PC-9 (cell line): ENCODE measurements at regions of chr7 and their contacts with region 1.

Region 1: GRCh38 chr7:117582219-117582704 is 102.4 kb downstream of the CFTR start:
- DNase-seq: peak; percentile 63 to 78
- H3K4me3 ChIP-seq: no peak overlapping the region
- H3K27ac ChIP-seq: peak overlapping the region; percentile 18; the same call in 1 of the 2 replicates
- H3K4me1 ChIP-seq: no peaks in the 10 kb centered on the region
- H3K27me3 ChIP-seq: no peaks in the 10 kb centered on the region
- CTCF ChIP-seq: no peak

Region 2: GRCh38 chr7:117597755-117598154 is 15.5 kb after region 1 on chr7:
- CTCF ChIA-PET with region 1: no interaction called
- POLR2A ChIA-PET with region 1: no interaction called
- intact Hi-C with region 1: no loop called
- DNase-seq: no peak
- H3K4me3 ChIP-seq: no peak overlapping the region
- H3K27ac ChIP-seq: no peak overlapping the region
- H3K4me1 ChIP-seq: no peaks in the 10 kb centered on the region
- H3K27me3 ChIP-seq: no peaks in the 10 kb centered on the region
- CTCF ChIP-seq: no peak

Region 3: DNA sequence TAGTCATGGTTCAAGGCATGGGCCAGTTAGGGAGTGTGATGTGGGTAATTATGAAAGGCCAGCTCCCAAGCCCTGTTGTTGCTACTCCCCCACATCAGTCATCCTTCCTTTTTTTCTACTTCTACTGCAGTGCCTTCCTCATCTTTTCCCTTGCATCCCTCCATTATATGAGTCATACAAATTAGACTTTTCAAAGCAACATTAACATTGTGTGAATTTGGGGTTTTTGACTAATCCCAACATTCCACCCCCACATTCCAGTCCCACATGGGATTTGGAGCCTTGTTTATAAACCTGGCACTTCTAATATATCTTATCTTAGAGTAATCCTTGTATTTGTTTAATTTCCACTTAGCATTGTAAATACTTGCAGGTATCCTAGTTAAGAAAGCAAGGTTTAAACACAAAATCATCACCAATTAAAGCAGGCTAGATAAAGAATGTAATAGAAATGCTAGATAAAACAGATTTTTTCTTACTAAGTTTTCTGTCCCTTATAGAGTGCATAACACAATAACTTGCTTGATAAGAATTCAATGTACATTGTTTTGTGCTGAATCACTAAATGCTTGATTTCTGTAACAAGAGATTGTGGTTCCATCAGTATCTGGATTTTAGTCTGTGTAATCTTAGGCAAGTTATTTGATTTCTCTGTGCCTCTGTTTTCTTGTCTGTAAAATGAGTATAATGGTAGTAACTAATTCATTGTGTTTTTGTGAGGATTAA is 63.4 kb after region 1 on chr7:
- CTCF ChIA-PET with region 1: no interaction called
- POLR2A ChIA-PET with region 1: no interaction called
- intact Hi-C with region 1: loop called (anchors 1 kb)
- DNase-seq: peak in 1 of 2 experiments; percentile 42
- H3K4me3 ChIP-seq: no peak overlapping the region
- H3K27ac ChIP-seq: no peak overlapping the region
- H3K4me1 ChIP-seq: 0 out of 2 replicates have a peak, but pooled peaks cover 4% of the 10 kb centered on the region
- H3K27me3 ChIP-seq: no peaks in the 10 kb centered on the region
- CTCF ChIP-seq: no peak

Region 4: DNA sequence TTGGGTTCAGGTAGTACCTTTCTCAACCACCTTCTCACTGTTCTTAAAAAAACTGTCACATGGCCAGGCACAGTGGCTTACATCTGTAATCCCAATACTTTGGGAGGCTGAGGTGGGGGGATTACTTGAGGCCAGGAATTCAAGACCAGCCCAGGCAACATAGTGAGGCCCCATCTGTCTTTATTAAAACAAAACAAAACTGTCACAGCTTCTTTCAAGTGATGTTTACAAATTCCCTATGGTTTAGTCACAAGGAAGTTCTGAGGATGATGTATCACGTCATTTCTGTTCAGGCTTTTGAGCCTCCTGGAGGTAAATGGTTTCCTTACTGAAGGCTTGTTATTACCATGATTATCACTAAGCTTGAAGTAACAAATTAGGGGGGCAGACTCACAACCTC is 83.8 kb after region 1 on chr7:
- CTCF ChIA-PET with region 1: no interaction called
- POLR2A ChIA-PET with region 1: no interaction called
- intact Hi-C with region 1: loop called (anchors 2 kb)
- DNase-seq: peak; percentile 26 to 64
- H3K4me3 ChIP-seq: no peak overlapping the region
- H3K27ac ChIP-seq: no peak overlapping the region
- H3K4me1 ChIP-seq: peaks cover 8% of the 10 kb centered on the region
- H3K27me3 ChIP-seq: no peaks in the 10 kb centered on the region
- CTCF ChIP-seq: no peak